Panc1 (cell line): ENCODE measurements at regions of chr1 and their contacts with region 1.

Region 1: GRCh38 chr1:93304716-93305138 is 41.0 kb upstream of the DR1 start:
- DNase-seq: peak; percentile 28
- ATAC-seq: peak; percentile 58; the same call in 1 of the 2 replicates
- H3K4me3 ChIP-seq: no peak overlapping the region
- H3K27ac ChIP-seq: no peak overlapping the region
- H3K4me1 ChIP-seq: no peaks in the 10 kb centered on the region
- H3K27me3 ChIP-seq: no peaks in the 10 kb centered on the region
- CTCF ChIP-seq: peak; percentile 78; the same call in 1 of the 2 replicates

Region 2: GRCh38 chr1:93021539-93022134 is 283.1 kb before region 1 on chr1:
- CTCF ChIA-PET with region 1: no interaction called
- POLR2A ChIA-PET with region 1: no interaction called
- in situ Hi-C with region 1: no loop called
- intact Hi-C with region 1: loop called (anchors 5 kb)
- DNase-seq: peak; percentile 33
- ATAC-seq: no peak
- H3K4me3 ChIP-seq: no peak overlapping the region
- H3K27ac ChIP-seq: no peak overlapping the region
- H3K4me1 ChIP-seq: no peaks in the 10 kb centered on the region
- H3K27me3 ChIP-seq: no peaks in the 10 kb centered on the region
- CTCF ChIP-seq: peak; percentile 69; the same call in 1 of the 2 replicates

Region 3: DNA sequence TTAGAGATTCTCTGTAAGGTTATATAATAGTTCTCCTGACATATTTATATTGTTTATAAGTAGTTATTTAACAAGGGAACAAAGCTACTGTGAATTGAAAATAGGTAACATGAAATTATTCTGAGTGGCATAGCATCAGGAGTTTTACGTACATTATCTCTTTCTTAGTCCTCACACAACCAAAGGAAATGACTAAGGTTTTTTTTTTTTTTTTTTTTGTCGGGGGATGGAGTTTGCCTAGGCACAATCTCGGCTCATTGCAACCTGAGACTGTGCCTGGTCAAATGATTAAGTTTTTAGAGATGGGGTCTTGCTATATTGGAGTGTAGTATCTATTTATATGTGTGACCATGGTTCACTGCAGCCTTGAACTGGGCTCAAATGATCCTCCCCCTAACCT is 149.4 kb before region 1 on chr1:
- CTCF ChIA-PET with region 1: interaction called, 11 read pairs
- POLR2A ChIA-PET with region 1: no interaction called
- in situ Hi-C with region 1: no loop called
- intact Hi-C with region 1: no loop called
- DNase-seq: no peak
- ATAC-seq: no peak
- H3K4me3 ChIP-seq: no peak overlapping the region
- H3K27ac ChIP-seq: no peak overlapping the region
- H3K4me1 ChIP-seq: no peaks in the 10 kb centered on the region
- H3K27me3 ChIP-seq: no peaks in the 10 kb centered on the region
- CTCF ChIP-seq: no peak

Region 4: GRCh38 chr1:93846211-93846991 is 541.7 kb after region 1 on chr1:
- CTCF ChIA-PET with region 1: no interaction called
- POLR2A ChIA-PET with region 1: no interaction called
- in situ Hi-C with region 1: no loop called
- intact Hi-C with region 1: loop called (anchors 10 kb)
- DNase-seq: no peak
- ATAC-seq: peak; percentile 80
- H3K4me3 ChIP-seq: peak overlapping the region; percentile 69 to 74
- H3K27ac ChIP-seq: peak overlapping the region; percentile 55
- H3K4me1 ChIP-seq: peaks cover 11% of the 10 kb centered on the region; the same call in 1 of the 2 replicates
- H3K27me3 ChIP-seq: no peaks in the 10 kb centered on the region
- CTCF ChIP-seq: peak; percentile 51